H1 (cell line): ENCODE measurements at regions of chr20 and their contacts with region 1.

Region 1: GRCh38 chr20:47379433-47380150 is 23.1 kb upstream of the ZMYND8 start:
- DNase-seq: no peak
- H3K4me3 ChIP-seq: no peak overlapping the region
- H3K27ac ChIP-seq: no peak overlapping the region
- H3K4me1 ChIP-seq: peaks cover 0 to 11% (median 2%) of the 10 kb centered on the region in 4 experiments; a peak in 5 of 7 replicates
- H3K27me3 ChIP-seq: no peaks in the 10 kb centered on the region
- CTCF ChIP-seq: no peak
- EP300 ChIP-seq: no peak
- POLR2A ChIP-seq: no peak
- RAD21 ChIP-seq: no peak

Region 2: DNA sequence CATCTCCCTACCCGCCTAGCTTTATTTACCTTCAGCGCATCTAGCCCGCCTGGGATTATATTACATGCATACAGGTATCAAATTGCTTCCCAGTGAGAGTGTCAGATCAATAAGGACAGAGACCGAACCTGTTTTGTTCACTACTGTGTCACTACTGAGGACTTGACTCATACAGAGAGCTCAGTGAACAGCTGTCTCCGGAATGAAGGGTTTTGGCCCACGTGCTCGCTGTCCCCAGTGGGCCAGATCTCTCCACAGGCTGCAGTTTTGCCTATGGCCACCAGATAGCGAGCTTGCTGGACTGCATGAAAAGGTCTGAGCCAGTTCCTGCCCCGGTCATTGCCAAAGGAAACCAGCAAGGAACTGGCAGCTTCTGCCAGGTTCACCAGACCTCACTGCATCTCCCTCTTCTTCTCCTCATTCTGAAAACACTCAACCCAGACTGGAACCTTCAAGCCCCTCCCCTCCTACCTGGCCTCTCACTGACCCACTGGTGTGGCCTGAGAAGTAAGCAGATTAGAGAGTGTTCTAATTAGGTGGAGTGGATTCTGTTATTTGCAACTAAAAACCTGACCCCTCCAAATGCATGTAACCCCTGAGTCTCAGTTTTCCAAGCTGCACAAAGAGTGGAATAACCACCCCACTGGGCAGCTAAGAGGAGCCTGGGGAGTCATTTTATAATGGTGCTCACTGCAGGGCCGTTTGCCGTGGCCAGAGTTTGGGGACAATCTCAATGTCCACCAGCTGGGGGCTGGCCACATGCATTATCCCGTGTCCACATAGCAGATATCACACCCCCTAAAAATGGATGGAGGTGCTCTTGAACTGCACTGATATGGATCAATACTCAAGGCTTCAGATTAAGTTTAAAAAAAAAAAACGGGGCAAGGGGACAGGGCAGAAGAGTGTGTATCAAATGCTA is 173.8 kb before region 1 on chr20:
- CTCF ChIA-PET with region 1: interaction called, 20 read pairs
- POLR2A ChIA-PET with region 1: interaction called, 4 read pairs
- DNase-seq: peak in 1 of 2 experiments; percentile 71
- H3K4me3 ChIP-seq: no peak overlapping the region
- H3K27ac ChIP-seq: no peak overlapping the region
- H3K4me1 ChIP-seq: peaks cover 0 to 17% (median 6%) of the 10 kb centered on the region in 4 experiments; a peak in 6 of 7 replicates
- H3K27me3 ChIP-seq: no peaks in the 10 kb centered on the region
- CTCF ChIP-seq: peak; percentile 57 to 78 (median 71)
- EP300 ChIP-seq: no peak
- POLR2A ChIP-seq: no peak
- RAD21 ChIP-seq: peak; percentile 50 to 68

Region 3: DNA sequence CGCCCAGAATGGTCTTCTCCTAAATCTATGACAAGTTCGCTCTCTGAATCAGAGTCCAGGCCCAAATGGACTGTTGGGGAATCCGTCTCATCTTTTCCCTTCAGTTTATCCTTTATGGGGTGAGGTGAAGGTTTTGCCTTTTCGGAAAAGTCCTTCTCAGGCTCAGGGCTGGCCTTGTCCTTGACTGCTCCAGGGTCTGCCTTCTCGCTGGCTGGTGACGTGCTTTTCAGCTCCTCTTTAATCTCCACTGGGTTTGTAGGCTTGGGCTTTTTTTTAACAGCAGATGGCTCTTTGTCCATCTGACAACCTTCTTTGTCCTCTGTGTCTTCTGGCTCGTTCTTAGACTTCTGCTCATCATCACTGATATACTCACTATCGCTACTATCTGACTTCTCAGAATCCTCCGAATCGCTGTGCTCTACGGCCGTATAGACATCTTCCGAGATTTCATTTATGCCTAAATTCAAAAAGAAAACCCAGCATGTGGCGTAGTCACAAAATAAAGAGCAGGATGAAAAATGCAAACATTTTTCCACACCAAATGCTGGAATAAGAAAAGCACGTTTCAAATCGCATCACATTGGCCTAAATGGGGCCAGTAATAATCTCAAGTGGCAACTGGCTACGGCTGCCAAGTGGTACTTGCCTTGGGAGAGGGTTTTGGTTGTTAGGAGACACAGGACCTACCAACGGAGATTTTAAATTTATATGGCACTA is 133.4 kb before region 1 on chr20:
- CTCF ChIA-PET with region 1: interaction called, 10 read pairs
- POLR2A ChIA-PET with region 1: interaction called, 4 read pairs
- DNase-seq: no peak
- H3K4me3 ChIP-seq: no peak overlapping the region
- H3K27ac ChIP-seq: no peak overlapping the region
- H3K4me1 ChIP-seq: no peaks in the 10 kb centered on the region
- H3K27me3 ChIP-seq: no peaks in the 10 kb centered on the region
- CTCF ChIP-seq: no peak
- EP300 ChIP-seq: no peak
- POLR2A ChIP-seq: no peak
- RAD21 ChIP-seq: no peak

Region 4: GRCh38 chr20:47286681-47287080 is 92.9 kb before region 1 on chr20:
- CTCF ChIA-PET with region 1: interaction called, 46 read pairs
- POLR2A ChIA-PET with region 1: interaction called, 3 read pairs
- DNase-seq: no peak
- H3K4me3 ChIP-seq: no peak overlapping the region
- H3K27ac ChIP-seq: no peak overlapping the region
- H3K4me1 ChIP-seq: no peaks in the 10 kb centered on the region
- H3K27me3 ChIP-seq: no peaks in the 10 kb centered on the region
- CTCF ChIP-seq: no peak
- EP300 ChIP-seq: no peak
- POLR2A ChIP-seq: no peak
- RAD21 ChIP-seq: no peak

Region 5: GRCh38 chr20:47317127-47317895 is 62.3 kb before region 1 on chr20:
- CTCF ChIA-PET with region 1: interaction called, 9 read pairs
- POLR2A ChIA-PET with region 1: interaction called, 1,191 read pairs
- DNase-seq: no peak
- H3K4me3 ChIP-seq: peak overlapping the region in 2 of 4 experiments; percentile 37 to 58; a peak in 3 of 8 replicates
- H3K27ac ChIP-seq: peak overlapping the region; percentile 97
- H3K4me1 ChIP-seq: peaks cover 51 to 68% (median 55%) of the 10 kb centered on the region in 4 experiments
- H3K27me3 ChIP-seq: no peaks in the 10 kb centered on the region
- CTCF ChIP-seq: no peak
- EP300 ChIP-seq: no peak
- POLR2A ChIP-seq: peak in 1 of 2 experiments; percentile 27; a peak in 2 of 3 replicates
- RAD21 ChIP-seq: no peak

Region 6: DNA sequence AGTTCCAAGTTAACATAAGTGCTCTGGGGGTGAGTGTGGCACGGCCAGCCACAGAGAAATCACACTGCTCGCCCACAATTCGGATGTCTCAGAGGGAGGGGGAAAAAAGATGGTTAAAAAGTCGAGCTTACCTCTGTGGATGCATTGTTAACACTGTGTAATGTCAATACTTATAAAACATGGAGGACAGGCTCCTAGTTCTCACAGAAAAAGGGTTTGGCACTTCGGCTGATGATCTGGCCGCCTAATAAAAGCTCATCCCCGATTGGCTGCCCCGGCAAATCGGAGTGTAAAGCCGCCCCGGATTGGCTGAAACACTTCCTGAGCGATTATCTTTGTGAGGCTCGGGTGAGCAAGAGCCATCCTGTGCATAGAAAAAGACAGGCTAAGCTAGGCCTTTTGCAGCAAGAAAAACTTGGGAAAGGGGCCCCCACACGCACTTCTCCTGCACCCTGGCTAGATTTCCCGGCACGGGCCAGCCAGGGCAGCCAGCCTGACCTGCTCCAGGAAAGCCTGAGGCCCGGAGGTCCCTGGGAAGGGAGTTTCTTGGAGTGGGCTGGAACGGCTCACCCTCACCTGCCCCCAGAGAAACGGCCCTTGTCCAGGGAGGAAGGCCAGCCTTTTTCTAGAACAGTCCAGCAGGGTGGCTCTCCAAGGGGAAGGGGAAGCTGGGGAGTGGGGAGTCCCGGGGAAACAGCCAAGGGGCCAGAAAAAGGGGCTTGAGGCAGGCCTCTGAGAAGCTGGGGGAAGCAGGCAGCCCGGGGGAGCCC is 22.9 kb before region 1 on chr20 and contains the start of gene ZMYND8:
- CTCF ChIA-PET with region 1: interaction called, 86 read pairs
- POLR2A ChIA-PET with region 1: interaction called, 423 read pairs
- DNase-seq: peak; percentile 70 to 98
- H3K4me3 ChIP-seq: peak within 1 kb of the TSS in 2 of 4 experiments; percentile 6 to 37; a peak in 5 of 8 replicates
- H3K27ac ChIP-seq: peak within 1 kb of the TSS; percentile 98
- H3K4me1 ChIP-seq: peaks cover 72 to 86% (median 79%) of the 10 kb centered on the region in 4 experiments
- H3K27me3 ChIP-seq: no peaks in the 10 kb centered on the region
- CTCF ChIP-seq: no peak
- EP300 ChIP-seq: no peak
- POLR2A ChIP-seq: no peak; a peak in 1 of 3 replicates
- RAD21 ChIP-seq: no peak
- total RNA-seq, gene ZMYND8: 163 TPM in 2 replicates

Region 7: GRCh38 chr20:47524015-47524784 is 144.6 kb after region 1 on chr20:
- CTCF ChIA-PET with region 1: no interaction called
- POLR2A ChIA-PET with region 1: no interaction called
- DNase-seq: no peak
- H3K4me3 ChIP-seq: no peak overlapping the region
- H3K27ac ChIP-seq: no peak overlapping the region
- H3K4me1 ChIP-seq: peaks cover 0 to 7% (median 4%) of the 10 kb centered on the region in 4 experiments; a peak in 5 of 7 replicates
- H3K27me3 ChIP-seq: no peaks in the 10 kb centered on the region
- CTCF ChIP-seq: no peak
- EP300 ChIP-seq: no peak
- POLR2A ChIP-seq: no peak
- RAD21 ChIP-seq: no peak